Mammary epithelial cell (primary cell): ENCODE measurements at regions of chr2 and their contacts with region 1.

Region 1: DNA sequence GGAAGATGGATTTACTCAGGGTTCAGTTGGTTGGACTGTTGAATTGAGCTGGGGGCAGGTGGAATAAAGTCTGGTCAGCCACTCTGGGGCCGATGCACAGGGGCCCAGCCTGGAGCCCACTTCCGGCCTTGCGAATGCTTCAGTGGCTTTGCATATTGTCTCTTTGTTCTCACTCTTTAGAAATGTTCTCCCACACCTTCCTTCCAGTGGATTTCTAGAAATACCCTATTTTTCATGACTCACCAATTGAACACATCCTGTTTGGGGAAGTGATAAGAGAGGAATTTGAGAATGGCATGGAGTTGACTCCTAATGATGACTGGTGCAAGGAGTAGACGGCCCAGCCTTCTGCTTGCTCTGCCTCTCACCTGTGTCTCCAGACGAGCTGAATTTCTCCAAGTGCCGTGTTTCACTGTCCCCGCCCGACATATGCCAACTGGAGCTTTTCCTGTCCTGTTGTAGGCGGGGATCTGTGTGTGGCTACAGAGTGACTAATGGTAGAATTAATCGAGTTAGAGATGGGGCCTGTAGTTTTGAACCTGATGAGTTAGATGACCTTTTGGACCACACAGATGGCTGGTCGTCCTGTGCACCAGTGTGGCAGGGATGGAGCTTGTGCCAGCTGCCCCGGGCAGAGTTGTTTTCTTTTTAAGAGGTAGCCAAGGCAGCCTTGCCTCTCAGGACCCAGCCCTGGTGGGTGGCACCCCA is 28.2 kb downstream of the ASAP2 start:
- DNase-seq: peak; percentile 98
- H3K4me3 ChIP-seq: peak overlapping the region in 2 of 3 experiments; percentile 8 to 26
- H3K27ac ChIP-seq: peak overlapping the region; percentile 92
- H3K4me1 ChIP-seq: peaks cover 94% of the 10 kb centered on the region
- H3K27me3 ChIP-seq: no peaks in the 10 kb centered on the region
- CTCF ChIP-seq: no peak

Region 2: DNA sequence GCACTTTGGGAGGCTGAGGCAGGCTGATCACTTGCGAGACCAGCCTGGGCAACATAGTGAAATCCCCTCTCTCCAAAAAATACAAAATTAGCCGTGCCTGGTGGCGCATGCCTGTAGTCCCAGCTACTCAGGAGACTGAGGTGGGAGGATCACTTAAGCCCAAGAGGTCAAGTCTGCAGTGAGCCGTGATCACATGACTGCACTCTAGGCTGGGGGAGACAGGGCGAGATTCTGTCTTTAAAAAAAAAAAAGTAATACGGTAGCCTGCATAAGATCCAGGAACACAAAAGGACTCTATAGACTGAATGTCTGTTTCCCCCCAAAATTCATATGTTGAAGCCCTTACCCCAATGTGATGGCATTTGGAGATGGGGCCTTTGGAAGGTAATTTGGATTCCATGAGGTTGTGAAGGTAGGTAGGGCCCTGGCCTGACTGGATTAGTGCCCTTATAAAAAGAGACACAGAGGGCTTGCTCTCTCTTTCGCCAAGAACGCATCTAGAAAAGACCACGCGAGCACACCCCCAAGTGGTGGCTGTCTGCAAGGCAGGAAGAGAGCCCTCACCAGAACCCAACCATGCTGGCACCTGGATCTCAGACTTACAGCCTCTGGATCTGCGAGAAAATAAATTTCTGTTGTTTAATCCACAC is 248.4 kb before region 1 on chr2:
- CTCF ChIA-PET with region 1: no interaction called
- dilution Hi-C with region 1: no loop called
- in situ Hi-C with region 1: no loop called
- intact Hi-C with region 1: no loop called
- DNase-seq: no peak
- H3K4me3 ChIP-seq: no peak overlapping the region
- H3K27ac ChIP-seq: no peak overlapping the region
- H3K4me1 ChIP-seq: peaks cover 22% of the 10 kb centered on the region
- H3K27me3 ChIP-seq: no peaks in the 10 kb centered on the region
- CTCF ChIP-seq: peak; percentile 6 to 22

Region 3: DNA sequence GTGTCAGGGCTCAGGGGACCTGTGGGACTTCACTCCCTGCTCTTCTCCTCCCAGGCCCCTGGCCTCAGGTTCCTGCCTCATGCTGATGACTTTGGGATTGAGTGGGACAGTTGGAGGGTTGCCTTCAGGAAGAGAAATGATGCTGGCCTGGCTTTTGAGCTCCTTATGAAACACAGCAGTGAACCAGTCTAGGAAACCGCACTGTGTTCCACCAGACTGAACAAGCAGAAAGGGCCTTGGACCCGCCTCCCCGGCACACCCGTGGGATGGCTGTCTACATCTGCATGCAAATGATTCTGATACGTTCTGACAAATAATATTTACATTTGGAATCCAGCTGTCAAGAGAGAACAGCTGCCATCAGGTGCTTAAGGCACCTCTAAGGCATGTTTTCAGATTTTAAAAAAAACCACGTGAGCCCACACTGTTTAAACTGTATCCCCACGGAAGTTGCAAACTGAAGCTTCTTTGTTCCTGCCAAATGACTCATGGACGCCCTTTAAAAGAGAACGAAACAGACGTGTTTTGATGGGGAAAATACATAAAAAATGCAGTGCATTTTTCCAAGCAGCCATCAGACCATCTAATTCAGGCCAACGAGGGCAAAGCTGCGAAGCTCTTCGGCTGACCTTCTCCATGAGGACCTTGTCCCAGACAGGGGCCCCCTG is 55.8 kb before region 1 on chr2:
- CTCF ChIA-PET with region 1: no interaction called
- dilution Hi-C with region 1: loop called (anchors 5 kb)
- in situ Hi-C with region 1: no loop called
- intact Hi-C with region 1: no loop called
- DNase-seq: peak; percentile 89
- H3K4me3 ChIP-seq: no peak overlapping the region
- H3K27ac ChIP-seq: peak overlapping the region; percentile 84
- H3K4me1 ChIP-seq: peaks cover 37% of the 10 kb centered on the region
- H3K27me3 ChIP-seq: no peaks in the 10 kb centered on the region
- CTCF ChIP-seq: no peak

Region 4: DNA sequence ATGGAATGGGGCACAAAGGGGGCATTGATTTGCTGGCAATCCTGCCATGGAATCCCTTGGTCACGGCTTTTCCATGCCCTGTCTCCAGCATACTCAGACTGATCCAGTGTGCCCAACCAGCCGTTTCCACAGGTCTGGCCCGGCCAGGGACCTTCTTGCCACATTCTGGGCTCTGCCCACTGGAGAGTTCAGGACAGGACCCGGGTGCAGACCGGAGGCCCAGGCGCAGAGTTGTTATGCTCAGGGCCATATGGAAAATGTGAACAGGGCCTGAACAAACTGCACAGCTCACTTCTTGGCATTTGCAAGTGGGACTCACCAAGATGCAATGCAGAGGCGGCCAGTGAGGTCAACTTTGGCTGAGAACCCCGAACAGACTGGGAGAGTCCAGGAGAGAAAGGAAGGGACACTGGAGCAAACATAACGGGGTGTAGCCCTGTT is 43.8 kb before region 1 on chr2:
- CTCF ChIA-PET with region 1: no interaction called
- dilution Hi-C with region 1: no loop called
- in situ Hi-C with region 1: no loop called
- intact Hi-C with region 1: no loop called
- DNase-seq: peak; percentile 58
- H3K4me3 ChIP-seq: no peak overlapping the region
- H3K27ac ChIP-seq: no peak overlapping the region
- H3K4me1 ChIP-seq: no peaks in the 10 kb centered on the region
- H3K27me3 ChIP-seq: no peaks in the 10 kb centered on the region
- CTCF ChIP-seq: no peak

Region 5: DNA sequence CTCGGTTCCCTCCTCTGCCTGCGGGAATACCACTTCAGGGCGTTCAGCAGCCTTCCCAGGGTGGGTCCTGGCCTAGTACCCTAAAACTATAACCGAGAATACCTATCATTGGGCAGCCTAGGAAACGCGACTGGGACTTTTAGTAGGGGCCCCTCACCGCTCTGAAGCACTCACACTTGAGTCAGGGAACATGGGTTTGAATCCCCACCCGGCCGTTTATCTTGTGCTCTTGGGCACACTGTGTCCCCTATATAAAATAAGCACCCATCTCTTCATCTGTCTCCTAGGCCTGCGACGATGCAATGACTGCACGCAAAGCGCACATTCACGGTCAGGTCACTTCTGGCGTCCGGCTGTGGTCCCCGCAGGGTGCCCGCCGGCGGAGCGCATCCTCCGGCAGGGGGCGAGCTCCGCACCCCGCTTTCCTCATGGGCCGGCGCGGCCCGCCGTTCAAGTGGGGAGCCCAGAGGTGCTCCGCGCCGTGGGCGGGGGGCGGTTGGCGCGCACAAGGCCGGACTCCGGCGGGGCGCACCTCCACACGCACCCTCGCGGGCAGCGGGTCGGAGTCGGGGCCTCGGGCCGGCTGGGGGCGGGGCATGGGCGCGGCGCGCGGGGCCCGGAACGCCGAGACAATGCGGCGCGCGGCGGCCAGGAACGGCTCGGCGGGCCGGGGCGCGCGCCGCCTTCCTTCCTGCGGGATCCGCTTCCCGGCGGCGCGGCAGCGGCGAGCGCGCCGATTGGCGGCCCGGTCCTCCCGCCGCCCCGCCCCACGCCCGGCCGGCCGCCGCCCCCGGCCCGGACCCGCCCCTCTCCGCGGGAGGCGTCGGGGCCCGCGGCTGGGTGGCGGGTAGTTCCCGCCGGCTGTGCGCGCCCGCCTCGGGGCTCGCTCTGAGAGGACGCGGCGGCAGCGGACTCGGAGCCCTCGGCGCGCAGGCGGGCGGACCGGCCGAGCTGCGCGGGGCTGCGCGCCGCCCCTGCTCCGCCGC is 28.6 kb before region 1 on chr2 and contains the start of gene ASAP2:
- CTCF ChIA-PET with region 1: no interaction called
- dilution Hi-C with region 1: no loop called
- in situ Hi-C with region 1: no loop called
- intact Hi-C with region 1: loop called (anchors 1 kb)
- DNase-seq: peak; percentile 70
- H3K4me3 ChIP-seq: peak within 1 kb of the TSS; percentile 65 to 98 (median 85)
- H3K27ac ChIP-seq: peak within 1 kb of the TSS; percentile 79
- H3K4me1 ChIP-seq: peaks cover 13% of the 10 kb centered on the region
- H3K27me3 ChIP-seq: no peaks in the 10 kb centered on the region
- CTCF ChIP-seq: peak; percentile 60 to 80
- total RNA-seq, gene ASAP2: 40.8 to 137 TPM

Region 6: DNA sequence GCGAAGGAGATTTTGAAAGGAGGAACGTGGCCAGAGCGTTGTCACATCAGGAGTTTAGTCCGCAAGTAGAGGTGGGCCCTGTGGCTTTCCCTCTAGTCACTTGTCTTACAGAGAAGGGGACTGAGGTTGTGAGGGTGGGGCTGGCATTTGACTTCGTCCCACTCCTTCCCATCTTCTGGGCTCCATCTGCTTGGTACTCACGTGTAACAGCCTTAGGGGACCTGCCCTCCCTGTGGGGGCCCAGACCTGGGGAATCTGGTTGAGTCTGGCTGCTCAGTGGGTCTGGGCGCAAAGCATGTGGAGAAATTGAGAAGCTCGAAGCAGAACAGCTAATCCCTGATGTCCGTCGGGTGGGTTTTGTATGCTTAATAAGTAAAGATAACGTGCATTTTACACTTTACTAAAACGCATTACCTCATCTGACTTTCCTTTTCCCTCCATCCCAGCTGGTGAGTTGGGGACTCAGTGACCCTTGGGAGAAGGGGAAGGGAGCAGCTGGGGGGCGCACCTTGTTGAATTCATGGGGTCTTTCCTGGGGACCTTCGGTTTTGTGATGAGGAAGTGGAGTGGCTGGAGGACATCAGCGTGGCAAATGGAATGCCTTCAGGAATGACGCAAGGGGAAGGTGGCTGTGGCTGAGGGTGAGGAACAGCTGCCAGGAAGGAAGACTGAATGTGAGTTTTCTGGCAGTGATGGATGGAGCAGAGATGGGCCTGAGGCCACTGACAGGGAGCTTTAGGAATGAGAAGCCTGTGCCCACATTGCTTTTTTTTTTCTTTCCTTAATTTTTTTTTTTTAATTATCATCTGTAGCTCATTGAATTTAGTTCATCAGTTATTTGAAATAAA is 16.5 kb after region 1 on chr2:
- CTCF ChIA-PET with region 1: no interaction called
- dilution Hi-C with region 1: no loop called
- in situ Hi-C with region 1: no loop called
- intact Hi-C with region 1: loop called (anchors 1 kb)
- DNase-seq: peak; percentile 82
- H3K4me3 ChIP-seq: no peak overlapping the region
- H3K27ac ChIP-seq: peak overlapping the region; percentile 95
- H3K4me1 ChIP-seq: peaks cover 71% of the 10 kb centered on the region
- H3K27me3 ChIP-seq: no peaks in the 10 kb centered on the region
- CTCF ChIP-seq: no peak

Region 7: GRCh38 chr2:9274701-9275343 is 40.0 kb after region 1 on chr2:
- CTCF ChIA-PET with region 1: no interaction called
- dilution Hi-C with region 1: no loop called
- in situ Hi-C with region 1: no loop called
- intact Hi-C with region 1: no loop called
- DNase-seq: no peak
- H3K4me3 ChIP-seq: no peak overlapping the region
- H3K27ac ChIP-seq: no peak overlapping the region
- H3K4me1 ChIP-seq: peaks cover 22% of the 10 kb centered on the region
- H3K27me3 ChIP-seq: no peaks in the 10 kb centered on the region
- CTCF ChIP-seq: no peak

Region 8: GRCh38 chr2:9287400-9288043 is 52.7 kb after region 1 on chr2:
- CTCF ChIA-PET with region 1: no interaction called
- dilution Hi-C with region 1: no loop called
- in situ Hi-C with region 1: no loop called
- intact Hi-C with region 1: loop called (anchors 1 kb)
- DNase-seq: peak; percentile 99
- H3K4me3 ChIP-seq: no peak overlapping the region
- H3K27ac ChIP-seq: peak overlapping the region; percentile 94
- H3K4me1 ChIP-seq: peaks cover 56% of the 10 kb centered on the region
- H3K27me3 ChIP-seq: no peaks in the 10 kb centered on the region
- CTCF ChIP-seq: no peak

Region 9: DNA sequence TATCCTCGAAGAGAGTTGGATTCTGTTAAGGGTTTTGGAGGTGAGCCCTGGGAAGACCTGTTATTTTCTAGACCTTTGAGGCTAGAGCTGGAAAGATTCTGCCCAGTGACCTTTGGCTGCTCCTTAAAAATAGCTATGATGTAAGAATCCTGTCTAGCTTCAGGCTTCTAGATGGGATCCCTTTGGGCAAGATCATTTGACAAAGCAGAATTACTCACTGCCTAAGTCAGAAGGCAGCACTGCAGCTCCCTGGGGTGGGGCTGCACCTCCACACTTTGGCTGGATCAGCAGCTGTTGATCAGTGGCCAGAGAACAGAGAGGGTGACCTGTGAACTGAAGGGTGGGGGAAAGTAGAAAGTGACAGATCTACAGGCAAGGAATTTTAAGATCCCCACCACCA is 75.5 kb after region 1 on chr2:
- CTCF ChIA-PET with region 1: no interaction called
- dilution Hi-C with region 1: loop called (anchors 5 kb)
- in situ Hi-C with region 1: no loop called
- intact Hi-C with region 1: loop called (anchors 2 kb)
- DNase-seq: peak; percentile 93
- H3K4me3 ChIP-seq: no peak overlapping the region
- H3K27ac ChIP-seq: peak overlapping the region; percentile 95
- H3K4me1 ChIP-seq: peaks cover 69% of the 10 kb centered on the region
- H3K27me3 ChIP-seq: no peaks in the 10 kb centered on the region
- CTCF ChIP-seq: no peak

Region 10: GRCh38 chr2:9333591-9334171 is 98.8 kb after region 1 on chr2:
- CTCF ChIA-PET with region 1: no interaction called
- dilution Hi-C with region 1: no loop called
- in situ Hi-C with region 1: no loop called
- intact Hi-C with region 1: loop called (anchors 1 kb)
- DNase-seq: peak; percentile 71
- H3K4me3 ChIP-seq: no peak overlapping the region
- H3K27ac ChIP-seq: no peak overlapping the region
- H3K4me1 ChIP-seq: peaks cover 13% of the 10 kb centered on the region
- H3K27me3 ChIP-seq: no peaks in the 10 kb centered on the region
- CTCF ChIP-seq: peak; percentile 75 to 85

Region 11: GRCh38 chr2:9897331-9897737 is 662.5 kb after region 1 on chr2:
- CTCF ChIA-PET with region 1: no interaction called
- dilution Hi-C with region 1: no loop called
- in situ Hi-C with region 1: no loop called
- intact Hi-C with region 1: no loop called
- DNase-seq: peak; percentile 99
- H3K4me3 ChIP-seq: peak overlapping the region in 1 of 3 experiments; percentile 2
- H3K27ac ChIP-seq: peak overlapping the region; percentile 97
- H3K4me1 ChIP-seq: peaks cover 36% of the 10 kb centered on the region
- H3K27me3 ChIP-seq: no peaks in the 10 kb centered on the region
- CTCF ChIP-seq: no peak